Breast epithelium (tissue), 4 donors: ENCODE measurements at regions of chr9 and their contacts with region 1.

Region 1: DNA sequence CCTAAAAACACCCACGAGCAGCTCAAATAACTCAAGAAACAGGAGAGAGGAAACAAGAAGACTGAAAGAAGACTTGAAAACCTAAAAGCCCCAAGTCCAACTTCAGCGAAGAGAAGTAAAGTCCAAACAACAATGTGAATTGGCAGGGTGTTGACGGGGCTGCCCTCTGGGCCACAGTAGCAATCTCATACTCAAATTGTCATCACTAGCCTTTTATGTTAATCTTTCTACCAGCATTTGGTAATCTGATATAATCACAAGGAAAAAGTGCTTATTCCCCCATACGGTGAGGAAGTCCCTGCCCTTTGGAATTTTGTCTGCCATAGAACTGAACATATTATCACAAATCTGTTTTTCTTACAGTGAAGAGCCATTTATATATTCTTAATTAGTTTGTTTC is 51.5 kb upstream of the IFNE start:
- DNase-seq: no peak
- H3K4me3 ChIP-seq: no peak overlapping the region
- H3K27ac ChIP-seq: no peak overlapping the region
- H3K4me1 ChIP-seq: no peaks in the 10 kb centered on the region
- H3K27me3 ChIP-seq: no peaks in the 10 kb centered on the region
- CTCF ChIP-seq: no peak
- POLR2A ChIP-seq: no peak

Region 2: GRCh38 chr9:23117616-23118015 is 1584.0 kb after region 1 on chr9:
- intact Hi-C with region 1: loop called (anchors 10 kb)
- DNase-seq: no peak
- H3K4me3 ChIP-seq: no peak overlapping the region
- H3K27ac ChIP-seq: no peak overlapping the region
- H3K4me1 ChIP-seq: no peaks in the 10 kb centered on the region
- H3K27me3 ChIP-seq: no peaks in the 10 kb centered on the region
- CTCF ChIP-seq: no peak
- POLR2A ChIP-seq: no peak